ENCODE measurements at regions of chr1 and their contacts with region 1.

Region 1: DNA sequence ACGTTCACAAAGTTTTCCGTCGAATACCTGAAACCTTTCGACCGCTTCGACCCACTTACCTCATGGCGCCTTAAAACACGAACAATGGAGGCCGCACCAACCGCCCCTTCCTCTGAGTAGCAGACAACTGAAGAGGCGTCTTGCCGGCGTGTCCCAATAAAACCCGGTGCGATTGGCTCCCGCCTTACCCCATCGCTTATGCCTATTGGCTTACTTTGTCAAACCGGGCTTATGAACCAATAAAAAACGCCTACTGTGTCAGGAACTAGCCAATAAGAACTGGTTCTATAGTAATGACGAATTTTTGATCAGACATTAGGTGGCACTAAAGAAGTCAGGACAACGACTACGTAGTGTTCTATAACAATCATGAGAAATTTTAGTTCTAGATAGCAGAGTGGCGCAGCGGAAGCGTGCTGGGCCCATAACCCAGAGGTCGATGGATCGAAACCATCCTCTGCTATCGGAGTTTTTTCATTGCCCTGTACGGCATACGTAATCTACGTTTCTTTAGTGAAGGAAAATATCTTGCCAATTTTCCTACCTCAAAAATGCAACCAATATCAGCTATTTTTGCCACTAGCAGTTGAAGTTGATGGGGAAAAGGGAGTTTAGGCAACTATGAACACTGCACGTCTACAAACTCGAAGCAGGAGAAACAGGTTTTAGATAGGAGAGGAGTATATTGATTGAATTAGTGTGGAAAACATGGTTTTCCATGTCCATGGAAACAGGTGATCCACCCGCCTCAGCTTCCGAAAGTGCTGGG is at the start of gene ILF2:
- DNase-seq: peak; percentile 88 to 99 (median 94)

Region 2: DNA sequence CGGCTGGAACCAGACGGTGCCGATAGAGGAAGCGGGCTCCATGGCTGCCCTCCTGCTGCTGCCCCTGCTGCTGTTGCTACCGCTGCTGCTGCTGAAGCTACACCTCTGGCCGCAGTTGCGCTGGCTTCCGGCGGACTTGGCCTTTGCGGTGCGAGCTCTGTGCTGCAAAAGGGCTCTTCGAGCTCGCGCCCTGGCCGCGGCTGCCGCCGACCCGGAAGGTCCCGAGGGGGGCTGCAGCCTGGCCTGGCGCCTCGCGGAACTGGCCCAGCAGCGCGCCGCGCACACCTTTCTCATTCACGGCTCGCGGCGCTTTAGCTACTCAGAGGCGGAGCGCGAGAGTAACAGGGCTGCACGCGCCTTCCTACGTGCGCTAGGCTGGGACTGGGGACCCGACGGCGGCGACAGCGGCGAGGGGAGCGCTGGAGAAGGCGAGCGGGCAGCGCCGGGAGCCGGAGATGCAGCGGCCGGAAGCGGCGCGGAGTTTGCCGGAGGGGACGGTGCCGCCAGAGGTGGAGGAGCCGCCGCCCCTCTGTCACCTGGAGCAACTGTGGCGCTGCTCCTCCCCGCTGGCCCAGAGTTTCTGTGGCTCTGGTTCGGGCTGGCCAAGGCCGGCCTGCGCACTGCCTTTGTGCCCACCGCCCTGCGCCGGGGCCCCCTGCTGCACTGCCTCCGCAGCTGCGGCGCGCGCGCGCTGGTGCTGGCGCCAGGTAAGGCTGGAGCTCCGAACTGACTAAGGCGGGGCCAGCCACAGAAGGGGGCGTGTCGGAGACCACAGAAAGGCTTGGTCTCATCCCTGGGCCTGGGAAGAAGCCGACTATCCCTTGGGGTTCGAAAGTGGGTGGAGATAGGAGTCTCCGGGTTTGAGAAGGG is 104.7 kb after region 1 on chr1:
- intact Hi-C with region 1: loop called (anchors 10 kb)
- DNase-seq: peak in 7 of 10 donors; percentile 28 to 92 (median 54)